GM18951 (cell line): ENCODE measurements at regions of chr6 and their contacts with region 1.

Region 1: DNA sequence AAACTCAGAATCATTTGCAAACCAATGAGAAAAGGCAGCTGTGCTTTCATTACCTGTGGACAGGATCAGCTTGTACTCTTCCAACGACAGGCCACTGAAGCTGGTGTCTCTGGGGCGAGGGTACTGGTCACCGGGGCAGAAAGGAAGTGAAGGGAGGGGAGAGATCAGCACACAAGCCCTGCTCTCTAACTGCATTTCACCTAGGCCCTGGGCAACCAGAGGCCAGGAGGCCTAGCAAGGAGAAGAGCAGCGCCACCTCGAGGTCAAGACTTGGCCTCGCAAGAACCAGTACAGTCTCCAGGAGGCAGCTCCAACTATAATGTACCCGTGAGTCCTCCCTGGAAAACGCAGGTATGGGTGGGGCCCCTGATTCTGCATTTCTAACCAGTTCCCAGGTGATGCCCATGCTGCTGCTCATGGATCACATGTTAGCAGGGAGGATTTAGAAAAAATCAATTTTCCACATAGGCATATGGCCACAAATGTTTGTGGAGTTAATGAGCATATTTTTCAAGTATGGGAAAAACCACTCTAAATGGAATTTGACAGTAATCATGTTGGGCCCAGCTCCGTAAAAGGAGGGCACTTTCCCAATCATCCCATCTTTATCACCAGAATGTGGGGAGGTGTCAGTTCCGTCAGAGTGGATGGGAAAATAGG is 11.0 kb downstream of the UQCC2 start:
- POLR2A ChIP-seq: no peak

Region 2: GRCh38 chr6:33579828-33580714 is 120.5 kb before region 1 on chr6 and contains the start of gene BAK1:
- in situ Hi-C with region 1: loop called (anchors 10 kb)
- POLR2A ChIP-seq: peak; percentile 78